ENCODE measurements at regions of chr4 and their contacts with region 1.

Region 1: DNA sequence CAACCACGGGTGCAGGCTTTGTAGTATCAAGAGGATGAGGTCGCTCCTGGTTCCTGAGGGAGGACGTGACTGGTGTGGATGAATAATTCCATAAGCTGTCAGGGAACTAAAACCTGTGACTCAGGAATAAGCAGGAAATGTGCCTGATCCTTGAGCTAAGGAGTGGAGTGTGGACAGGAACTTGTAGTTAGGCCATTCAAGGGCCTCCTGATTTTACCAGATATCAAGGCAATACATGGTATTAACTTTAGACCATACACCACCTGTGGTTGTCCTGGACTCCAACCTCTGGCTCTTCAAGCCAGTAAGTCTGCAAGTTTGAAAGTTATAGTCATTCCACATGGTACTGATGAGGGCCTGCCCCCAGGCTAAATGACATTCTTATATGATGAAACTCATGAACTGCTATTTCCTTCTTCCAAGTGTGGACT is 12.1 kb upstream of the ING2 start:
- DNase-seq: peak; percentile 79
- ATAC-seq: peak; percentile 82
- H3K4me3 ChIP-seq: no peak overlapping the region
- H3K27ac ChIP-seq: peak overlapping the region; percentile 82
- H3K4me1 ChIP-seq: peaks cover 24% of the 10 kb centered on the region
- H3K27me3 ChIP-seq: no peaks in the 10 kb centered on the region
- CTCF ChIP-seq: no peak

Region 2: DNA sequence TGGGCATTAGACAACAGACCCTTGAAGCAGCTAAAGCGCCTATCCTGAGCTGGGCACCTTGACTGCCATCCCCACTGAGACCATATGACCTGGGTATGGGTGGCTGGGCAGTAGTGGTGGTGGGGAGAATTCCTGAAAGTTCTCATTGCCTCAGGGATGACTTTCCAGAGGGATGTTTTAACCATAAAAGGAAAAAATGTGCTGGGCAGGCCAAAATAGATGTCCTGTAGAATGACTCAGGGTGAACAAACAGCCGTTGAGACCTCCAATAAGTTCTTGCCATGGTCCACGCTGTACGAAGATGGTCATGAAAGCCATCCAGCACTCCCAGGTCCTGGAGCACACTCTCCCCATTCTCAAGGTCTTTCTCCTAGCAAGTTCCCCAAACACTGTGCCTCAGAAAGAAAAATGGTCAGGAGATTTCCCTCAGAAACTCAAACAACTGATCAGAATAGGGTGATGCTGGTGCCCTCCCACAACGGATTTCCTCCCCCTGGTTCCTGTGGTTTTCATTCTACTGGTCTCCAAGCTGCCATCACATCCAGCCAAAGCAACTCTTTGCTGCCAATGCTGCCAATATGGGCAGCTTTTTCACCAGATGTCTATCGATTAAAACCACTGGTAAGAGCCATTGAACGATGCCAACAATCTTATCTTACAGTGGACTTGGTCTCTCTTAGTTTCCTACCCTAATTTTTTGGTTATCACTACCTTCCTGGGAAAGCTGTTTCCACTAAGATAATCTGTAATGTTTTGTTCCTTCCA is 37.2 kb before region 1 on chr4:
- CTCF ChIA-PET with region 1: no interaction called
- POLR2A ChIA-PET with region 1: interaction called, 18 read pairs
- intact Hi-C with region 1: no loop called
- DNase-seq: no peak
- ATAC-seq: no peak
- H3K4me3 ChIP-seq: no peak overlapping the region
- H3K27ac ChIP-seq: no peak overlapping the region
- H3K4me1 ChIP-seq: no peaks in the 10 kb centered on the region
- H3K27me3 ChIP-seq: no peaks in the 10 kb centered on the region
- CTCF ChIP-seq: no peak